Naive thymus-derived CD4-positive, alpha-beta T cell (primary cell): ENCODE measurements at regions of chr1 and their contacts with region 1.

Region 1: GRCh38 chr1:150876119-150876454 is 312 bp downstream of the ARNT start:
- DNase-seq: no peak
- ATAC-seq: peak; percentile 50
- H3K4me3 ChIP-seq: peak overlapping the region; percentile 68
- H3K4me3 Mint-ChIP-seq: peak overlapping the region; percentile 87 to 96 (median 95)
- H3K27ac ChIP-seq: peak overlapping the region; percentile 83
- H3K27ac Mint-ChIP-seq: peak overlapping the region; percentile 89 to 97 (median 94)
- H3K4me1 ChIP-seq: peaks cover 0 to 19% of the 10 kb centered on the region in 2 donors
- H3K4me1 Mint-ChIP-seq: peaks cover 13 to 45% (median 37%) of the 10 kb centered on the region in 7 donors
- H3K27me3 ChIP-seq: no peaks in the 10 kb centered on the region
- H3K27me3 Mint-ChIP-seq: no peaks in the 10 kb centered on the region

Region 2: DNA sequence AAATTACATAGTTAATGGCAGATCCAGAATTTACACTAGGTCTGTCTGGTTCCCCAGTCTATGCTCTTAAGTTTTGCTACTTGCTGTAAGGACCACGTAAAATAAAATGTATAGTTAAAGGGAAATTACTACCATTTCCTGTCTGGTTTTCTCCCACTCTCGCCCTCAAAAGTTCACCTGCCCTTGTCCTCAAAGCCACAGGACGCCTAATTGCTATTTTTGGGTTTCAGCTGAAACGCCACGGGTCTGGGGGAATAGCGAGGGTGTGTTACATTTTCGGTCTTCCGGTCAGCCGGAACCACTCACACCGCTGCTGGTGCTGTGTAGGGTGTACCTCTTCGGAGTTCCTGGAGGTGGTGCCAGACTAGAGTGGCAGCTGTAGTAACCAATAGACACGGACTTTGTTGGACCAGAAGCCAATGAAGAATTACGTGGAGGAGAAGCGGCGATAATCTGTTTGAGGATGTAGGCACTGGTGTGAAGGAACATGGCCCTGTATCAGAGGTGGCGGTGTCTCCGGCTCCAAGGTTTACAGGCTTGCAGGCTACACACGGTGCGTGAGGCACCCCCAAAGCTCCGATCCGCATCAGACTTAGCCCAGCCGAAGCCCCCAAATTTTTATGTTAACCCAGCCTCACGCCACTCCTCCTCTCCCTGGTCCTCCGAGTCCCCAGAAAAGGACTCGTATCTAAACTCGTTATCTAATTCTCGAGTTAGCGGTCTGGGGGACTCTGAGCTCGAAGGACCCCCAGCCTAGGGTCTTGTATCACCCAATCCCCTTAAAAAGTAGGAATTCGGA is 388.9 kb before region 1 on chr1 and contains the start of gene TARS2:
- CTCF ChIA-PET with region 1: no interaction called
- POLR2A ChIA-PET with region 1: interaction called, 3 read pairs
- intact Hi-C with region 1: loop called in 1 of 2 experiments (anchors 1 kb)
- DNase-seq: peak; percentile 71 to 97 (median 95)
- ATAC-seq: peak; percentile 100
- H3K4me3 ChIP-seq: peak within 1 kb of the TSS; percentile 95
- H3K4me3 Mint-ChIP-seq: peak within 1 kb of the TSS; percentile 91 to 100 (median 96)
- H3K27ac ChIP-seq: peak within 1 kb of the TSS; percentile 83
- H3K27ac Mint-ChIP-seq: peak within 1 kb of the TSS; percentile 92 to 100 (median 99)
- H3K4me1 ChIP-seq: peaks cover 4 to 8% of the 10 kb centered on the region in 2 donors
- H3K4me1 Mint-ChIP-seq: peaks cover 5 to 28% (median 20%) of the 10 kb centered on the region in 7 donors
- H3K27me3 ChIP-seq: no peaks in the 10 kb centered on the region
- H3K27me3 Mint-ChIP-seq: no peaks in the 10 kb centered on the region
- total RNA-seq, gene TARS2: 30.3 to 39.0 (median 36.4) TPM

Region 3: DNA sequence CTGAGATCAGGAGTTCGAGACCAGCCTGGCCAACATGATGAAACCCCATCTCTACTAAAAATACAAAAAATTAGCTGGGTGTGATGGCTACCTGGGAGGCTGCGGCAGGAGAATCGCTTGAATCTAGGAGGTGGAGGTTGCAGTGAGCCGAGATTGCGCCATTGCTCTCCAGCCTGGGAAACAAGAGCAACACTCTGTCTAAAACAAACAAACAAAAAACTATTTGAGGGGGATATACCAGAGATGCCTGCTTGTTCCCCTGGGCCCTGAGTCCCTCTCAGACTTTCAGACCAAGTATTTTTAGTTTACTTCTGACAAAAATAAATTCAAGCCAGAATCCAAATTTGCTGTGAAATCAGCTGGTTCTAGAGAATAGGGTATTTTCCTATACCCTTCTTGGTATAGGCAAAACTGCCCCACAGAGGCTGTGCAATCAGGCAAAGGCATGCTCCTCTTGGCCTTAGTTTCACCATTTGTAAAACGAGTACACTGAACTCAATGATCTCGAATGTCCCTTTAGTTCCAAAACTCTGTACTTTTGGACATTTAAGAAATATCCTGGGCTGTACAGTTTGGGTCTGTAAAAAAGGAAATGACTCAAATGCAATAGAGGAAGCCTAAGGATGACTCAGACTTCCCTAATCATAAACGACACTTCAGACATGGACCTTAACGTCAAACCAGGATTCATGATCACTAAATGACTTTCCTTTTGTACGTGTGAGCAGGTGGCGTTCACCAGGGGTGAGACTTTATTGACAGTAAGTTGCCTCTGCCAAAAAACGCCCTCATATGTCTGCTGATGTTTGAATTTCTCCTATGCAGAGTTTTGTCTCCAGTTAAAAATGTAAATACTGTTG is 262.8 kb before region 1 on chr1:
- CTCF ChIA-PET with region 1: no interaction called
- POLR2A ChIA-PET with region 1: no interaction called
- intact Hi-C with region 1: no loop called
- DNase-seq: peak in 2 of 9 donors; percentile 47 to 55
- ATAC-seq: peak; percentile 48
- H3K4me3 ChIP-seq: no peak overlapping the region
- H3K4me3 Mint-ChIP-seq: peak overlapping the region in 4 of 10 donors; percentile 21 to 80 (median 54)
- H3K27ac ChIP-seq: no peak overlapping the region
- H3K27ac Mint-ChIP-seq: peak overlapping the region; percentile 29 to 95 (median 88)
- H3K4me1 ChIP-seq: peaks cover 30 to 52% of the 10 kb centered on the region in 2 donors
- H3K4me1 Mint-ChIP-seq: peaks cover 27 to 59% (median 51%) of the 10 kb centered on the region in 7 donors
- H3K27me3 ChIP-seq: no peaks in the 10 kb centered on the region
- H3K27me3 Mint-ChIP-seq: no peaks in the 10 kb centered on the region

Region 4: GRCh38 chr1:150765296-150765976 is 110.7 kb before region 1 on chr1 and contains the start of gene CTSS:
- CTCF ChIA-PET with region 1: no interaction called
- POLR2A ChIA-PET with region 1: no interaction called
- intact Hi-C with region 1: loop called in 1 of 2 experiments (anchors 2 kb)
- DNase-seq: peak in 6 of 9 donors; percentile 37 to 55 (median 43)
- ATAC-seq: peak; percentile 86
- H3K4me3 ChIP-seq: peak within 1 kb of the TSS; percentile 60
- H3K4me3 Mint-ChIP-seq: peak within 1 kb of the TSS; percentile 87 to 98 (median 93)
- H3K27ac ChIP-seq: peak within 1 kb of the TSS; percentile 82
- H3K27ac Mint-ChIP-seq: peak within 1 kb of the TSS; percentile 83 to 99 (median 96)
- H3K4me1 ChIP-seq: peaks cover 9 to 15% of the 10 kb centered on the region in 2 donors
- H3K4me1 Mint-ChIP-seq: peaks cover 36 to 68% (median 52%) of the 10 kb centered on the region in 7 donors
- H3K27me3 ChIP-seq: no peaks in the 10 kb centered on the region
- H3K27me3 Mint-ChIP-seq: peaks cover 0 to 8% (median 0%) of the 10 kb centered on the region in 5 donors
- total RNA-seq, gene CTSS: 91.1 to 1,020 (median 106) TPM

Region 5: GRCh38 chr1:150841626-150842025 is 34.5 kb before region 1 on chr1:
- CTCF ChIA-PET with region 1: no interaction called
- POLR2A ChIA-PET with region 1: no interaction called
- intact Hi-C with region 1: loop called (anchors 1 kb)
- DNase-seq: peak in 7 of 9 donors; percentile 54 to 82 (median 70)
- ATAC-seq: peak; percentile 93
- H3K4me3 ChIP-seq: no peak overlapping the region
- H3K4me3 Mint-ChIP-seq: peak overlapping the region in 9 of 10 donors; percentile 10 to 66 (median 49)
- H3K27ac ChIP-seq: peak overlapping the region; percentile 63
- H3K27ac Mint-ChIP-seq: peak overlapping the region; percentile 49 to 94 (median 86)
- H3K4me1 ChIP-seq: peaks cover 0 to 29% of the 10 kb centered on the region in 2 donors
- H3K4me1 Mint-ChIP-seq: peaks cover 27 to 57% (median 49%) of the 10 kb centered on the region in 7 donors
- H3K27me3 ChIP-seq: no peaks in the 10 kb centered on the region
- H3K27me3 Mint-ChIP-seq: no peaks in the 10 kb centered on the region

Region 6: DNA sequence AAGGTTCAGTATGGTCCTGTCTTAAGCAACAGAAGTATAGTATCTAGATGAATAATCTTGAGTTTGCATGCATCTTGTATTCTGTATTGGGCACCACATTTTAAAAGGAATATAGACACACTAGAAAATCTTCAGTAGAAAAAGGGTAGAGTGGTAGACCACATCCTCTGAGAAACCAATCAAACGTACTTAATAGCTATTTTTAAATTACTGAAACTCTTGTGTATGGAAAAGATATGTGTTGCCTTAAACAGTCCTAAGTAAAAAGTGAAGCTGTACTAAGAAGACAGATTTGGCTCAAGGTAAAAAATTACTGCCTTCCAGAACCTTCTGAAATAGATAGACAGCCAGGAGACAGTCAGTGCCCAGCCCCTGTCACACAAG is 13.9 kb after region 1 on chr1:
- CTCF ChIA-PET with region 1: no interaction called
- POLR2A ChIA-PET with region 1: interaction called, 4 read pairs
- intact Hi-C with region 1: loop called in 1 of 2 experiments (anchors 1 kb)
- DNase-seq: peak in 6 of 9 donors; percentile 28 to 62 (median 56)
- ATAC-seq: peak; percentile 61
- H3K4me3 ChIP-seq: peak overlapping the region; percentile 5
- H3K4me3 Mint-ChIP-seq: peak overlapping the region; percentile 10 to 81 (median 64)
- H3K27ac ChIP-seq: no peak overlapping the region
- H3K27ac Mint-ChIP-seq: peak overlapping the region in 5 of 9 donors; percentile 2 to 55 (median 42)
- H3K4me1 ChIP-seq: peaks cover 11 to 16% of the 10 kb centered on the region in 2 donors
- H3K4me1 Mint-ChIP-seq: peaks cover 16 to 34% (median 29%) of the 10 kb centered on the region in 7 donors
- H3K27me3 ChIP-seq: no peaks in the 10 kb centered on the region
- H3K27me3 Mint-ChIP-seq: peaks cover 0 to 6% (median 0%) of the 10 kb centered on the region in 5 donors

Region 7: DNA sequence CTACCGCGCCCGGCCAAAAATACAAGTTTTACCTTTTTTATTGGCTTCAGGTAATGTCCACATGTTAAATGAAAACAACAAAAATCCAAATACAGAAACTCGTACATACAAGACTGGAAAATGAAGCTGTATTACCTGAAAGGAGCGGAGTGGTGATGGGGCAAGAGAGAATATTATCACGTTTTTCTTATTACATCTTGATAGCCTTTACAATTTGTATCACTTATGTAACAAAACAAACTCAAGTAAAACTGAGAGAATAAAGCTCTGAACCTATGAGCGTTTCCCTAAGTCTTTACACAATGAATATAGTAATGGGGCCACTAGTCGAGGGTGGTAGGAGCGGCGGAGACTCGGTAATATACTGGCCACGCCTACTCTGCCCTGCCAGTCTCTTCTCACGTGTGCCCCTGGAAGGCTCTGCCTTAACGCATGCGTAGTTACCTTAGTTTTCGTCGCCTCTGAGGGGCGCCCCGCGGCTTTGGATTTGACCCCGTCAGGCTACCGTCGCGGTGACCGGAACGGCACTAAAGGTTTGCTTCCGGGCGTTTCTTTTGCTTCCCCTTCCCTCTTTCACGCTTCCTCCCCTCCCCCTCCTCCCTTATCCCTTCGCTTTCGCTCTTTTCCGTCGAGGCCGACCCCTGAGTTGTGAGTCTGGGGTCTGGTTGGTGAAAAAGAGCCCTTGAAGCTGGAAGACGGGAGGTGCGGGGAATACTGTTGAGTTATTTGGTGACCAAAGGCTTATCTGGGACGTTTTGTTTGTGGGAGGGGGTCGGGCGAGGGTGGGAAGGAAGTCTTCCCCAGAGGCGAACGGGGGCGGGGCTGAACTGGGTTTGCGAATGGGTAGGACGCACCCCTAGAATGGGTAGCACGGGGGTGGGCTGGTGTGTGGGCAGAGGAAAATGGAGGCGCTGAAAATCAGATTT is 50.0 kb after region 1 on chr1 and contains the start of gene SETDB1:
- CTCF ChIA-PET with region 1: no interaction called
- POLR2A ChIA-PET with region 1: interaction called, 6 read pairs
- intact Hi-C with region 1: loop called (anchors 1 kb)
- DNase-seq: peak; percentile 69 to 93 (median 90)
- ATAC-seq: peak; percentile 98
- H3K4me3 ChIP-seq: peak within 1 kb of the TSS; percentile 92
- H3K4me3 Mint-ChIP-seq: peak within 1 kb of the TSS; percentile 92 to 97 (median 94)
- H3K27ac ChIP-seq: peak within 1 kb of the TSS; percentile 91
- H3K27ac Mint-ChIP-seq: peak within 1 kb of the TSS; percentile 92 to 99 (median 95)
- H3K4me1 ChIP-seq: peaks cover 0 to 7% of the 10 kb centered on the region in 2 donors
- H3K4me1 Mint-ChIP-seq: peaks cover 15 to 35% (median 27%) of the 10 kb centered on the region in 7 donors
- H3K27me3 ChIP-seq: no peaks in the 10 kb centered on the region
- H3K27me3 Mint-ChIP-seq: no peaks in the 10 kb centered on the region
- total RNA-seq, gene SETDB1: 57.3 to 94.9 (median 61.7) TPM

Region 8: DNA sequence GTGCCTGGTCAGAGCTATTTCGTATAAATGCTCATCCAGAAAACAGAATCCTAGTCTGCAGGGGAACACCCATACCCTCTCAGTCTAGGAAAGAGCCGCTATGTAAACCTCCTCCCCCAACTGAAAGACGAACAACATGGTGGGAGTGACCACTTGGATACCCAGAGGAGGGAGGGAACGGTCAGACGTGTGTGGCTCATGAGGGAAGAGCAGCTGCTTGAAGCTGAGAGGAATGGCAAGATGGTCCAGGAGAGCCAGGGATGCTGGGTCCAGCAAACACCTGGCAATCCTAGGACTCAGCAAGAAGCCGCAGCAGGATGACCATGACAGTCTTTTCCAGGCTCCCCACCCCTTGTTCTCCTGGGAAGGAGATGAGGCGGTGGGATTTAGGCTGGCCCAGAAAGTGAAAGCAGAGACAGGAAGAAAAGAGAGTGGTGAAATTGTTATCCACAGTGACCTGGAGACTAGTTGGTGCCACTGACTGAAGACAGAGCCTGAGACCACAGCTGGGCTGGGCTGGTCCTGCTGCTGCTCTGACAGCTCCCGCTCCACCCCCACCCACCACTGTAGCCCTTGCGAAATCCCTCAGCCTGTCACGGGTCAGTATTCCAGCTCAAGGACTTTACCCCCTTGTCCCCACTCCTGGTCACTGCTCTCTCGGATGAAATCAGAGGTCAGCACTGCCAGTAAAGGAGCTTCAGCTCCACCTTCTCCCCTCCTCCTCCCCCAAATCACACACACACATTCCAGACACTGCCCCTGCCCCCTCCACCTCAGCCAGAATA is 94.9 kb after region 1 on chr1:
- CTCF ChIA-PET with region 1: no interaction called
- POLR2A ChIA-PET with region 1: no interaction called
- intact Hi-C with region 1: no loop called
- DNase-seq: no peak
- ATAC-seq: no peak
- H3K4me3 ChIP-seq: no peak overlapping the region
- H3K4me3 Mint-ChIP-seq: peak overlapping the region in 9 of 10 donors; percentile 8 to 88 (median 44)
- H3K27ac ChIP-seq: peak overlapping the region; percentile 92
- H3K27ac Mint-ChIP-seq: peak overlapping the region; percentile 48 to 94 (median 89)
- H3K4me1 ChIP-seq: peaks cover 26 to 29% of the 10 kb centered on the region in 2 donors
- H3K4me1 Mint-ChIP-seq: peaks cover 22 to 52% (median 47%) of the 10 kb centered on the region in 7 donors
- H3K27me3 ChIP-seq: no peaks in the 10 kb centered on the region
- H3K27me3 Mint-ChIP-seq: no peaks in the 10 kb centered on the region

Region 9: DNA sequence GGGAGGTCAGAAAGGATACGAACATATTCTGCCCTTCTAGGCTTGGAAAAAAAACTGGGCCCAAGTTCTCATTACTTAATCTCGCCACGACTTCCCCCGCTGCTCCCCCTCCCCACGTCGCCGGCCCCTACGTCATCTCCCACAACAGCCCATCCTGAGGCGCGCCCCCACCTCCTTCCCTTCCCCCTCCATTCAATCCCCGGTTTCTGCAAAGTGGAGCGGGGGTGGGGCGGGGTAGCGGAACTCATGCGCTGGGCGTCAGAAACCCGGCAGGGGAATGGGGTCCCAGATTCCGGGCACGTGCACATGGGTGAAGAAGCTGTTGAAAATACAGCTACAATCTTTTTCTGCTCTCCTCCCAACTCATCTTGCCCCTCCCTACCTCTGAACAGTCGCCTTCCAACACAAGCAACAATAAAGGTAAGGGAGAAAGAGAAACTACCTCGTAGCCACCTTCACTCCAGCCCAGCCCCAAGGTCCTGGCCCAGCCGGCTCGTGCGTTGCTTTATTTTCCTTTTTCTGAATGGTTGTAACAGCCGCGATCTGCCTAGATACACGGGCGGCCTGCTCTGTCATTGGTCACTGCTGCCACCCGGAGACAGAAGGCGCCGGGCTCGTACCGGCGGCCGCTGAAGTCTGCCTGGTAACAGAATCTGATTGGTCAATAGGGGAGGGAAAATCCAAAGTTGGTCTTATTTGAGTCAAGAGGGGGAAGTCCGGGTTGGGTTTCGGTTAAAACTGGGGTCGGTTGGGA is 470.9 kb after region 1 on chr1 and contains the start of gene RFX5:
- CTCF ChIA-PET with region 1: no interaction called
- POLR2A ChIA-PET with region 1: interaction called, 6 read pairs
- intact Hi-C with region 1: loop called in 1 of 2 experiments (anchors 1 kb)
- DNase-seq: peak; percentile 73 to 98 (median 94)
- ATAC-seq: peak; percentile 95
- H3K4me3 ChIP-seq: peak within 1 kb of the TSS; percentile 75
- H3K4me3 Mint-ChIP-seq: peak within 1 kb of the TSS; percentile 85 to 98 (median 95)
- H3K27ac ChIP-seq: peak within 1 kb of the TSS; percentile 96
- H3K27ac Mint-ChIP-seq: peak within 1 kb of the TSS; percentile 95 to 100 (median 99)
- H3K4me1 ChIP-seq: peaks cover 13 to 16% of the 10 kb centered on the region in 2 donors
- H3K4me1 Mint-ChIP-seq: peaks cover 20 to 44% (median 39%) of the 10 kb centered on the region in 7 donors
- H3K27me3 ChIP-seq: no peaks in the 10 kb centered on the region
- H3K27me3 Mint-ChIP-seq: no peaks in the 10 kb centered on the region
- total RNA-seq, gene RFX5: 62.6 to 89.3 (median 82.2) TPM